Mucosa of descending colon (tissue), 3 donors: ENCODE measurements at regions of chr5 and their contacts with region 1.

Region 1: DNA sequence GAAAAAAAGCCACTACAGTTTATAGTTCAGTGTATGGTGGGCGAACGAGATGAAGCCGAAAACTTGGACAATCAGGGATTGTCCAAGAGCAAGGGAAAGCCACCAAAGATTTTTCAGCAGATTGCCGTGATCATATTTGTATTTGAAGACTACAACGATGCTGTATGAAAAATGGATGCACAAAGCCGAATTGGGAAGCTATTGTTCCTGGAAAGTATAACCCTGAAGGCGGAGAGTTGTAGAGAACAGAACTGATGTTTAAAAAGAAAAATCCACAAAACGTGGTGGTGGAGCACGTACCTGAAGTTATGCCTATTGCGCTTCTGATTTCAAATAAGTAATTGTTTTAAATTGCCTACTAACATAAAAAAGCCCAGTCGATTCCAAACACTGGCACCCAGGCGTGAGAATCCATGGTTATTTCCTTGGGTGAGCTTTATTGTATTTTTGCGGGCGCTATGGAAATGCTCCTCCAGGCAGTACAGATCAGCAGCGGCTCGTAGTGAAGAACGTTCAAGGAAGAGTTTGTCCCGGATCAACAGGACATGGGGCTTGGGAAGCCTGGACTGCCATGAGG is 772 bp upstream of the TARS1 start:
- DNase-seq: no peak
- ATAC-seq: no peak
- H3K4me3 ChIP-seq: peak overlapping the region; percentile 67
- H3K4me1 ChIP-seq: peaks cover 25% of the 10 kb centered on the region
- CTCF ChIP-seq: no peak

Region 2: GRCh38 chr5:33936004-33936380 is 496.0 kb after region 1 on chr5:
- intact Hi-C with region 1: loop called in 1 of 2 experiments (anchors 10 kb)
- DNase-seq: peak in 2 of 3 donors; percentile 40 to 48
- ATAC-seq: peak; percentile 52
- H3K4me3 ChIP-seq: no peak overlapping the region
- H3K4me1 ChIP-seq: no peaks in the 10 kb centered on the region
- CTCF ChIP-seq: no peak